Activated naive CD4-positive, alpha-beta T cell treated with anti-CD3 and anti-CD28 coated beads for 36 hours (primary cell): ENCODE measurements at regions of chr5 and their contacts with region 1.

Region 1: GRCh38 chr5:179142434-179143198 is 82.4 kb downstream of the ZNF354C start:
- DNase-seq: peak; percentile 75
- H3K4me3 Mint-ChIP-seq: no peak overlapping the region
- H3K27ac Mint-ChIP-seq: peak overlapping the region; percentile 79
- H3K4me1 Mint-ChIP-seq: peaks cover 48% of the 10 kb centered on the region
- H3K27me3 Mint-ChIP-seq: no peaks in the 10 kb centered on the region

Region 2: DNA sequence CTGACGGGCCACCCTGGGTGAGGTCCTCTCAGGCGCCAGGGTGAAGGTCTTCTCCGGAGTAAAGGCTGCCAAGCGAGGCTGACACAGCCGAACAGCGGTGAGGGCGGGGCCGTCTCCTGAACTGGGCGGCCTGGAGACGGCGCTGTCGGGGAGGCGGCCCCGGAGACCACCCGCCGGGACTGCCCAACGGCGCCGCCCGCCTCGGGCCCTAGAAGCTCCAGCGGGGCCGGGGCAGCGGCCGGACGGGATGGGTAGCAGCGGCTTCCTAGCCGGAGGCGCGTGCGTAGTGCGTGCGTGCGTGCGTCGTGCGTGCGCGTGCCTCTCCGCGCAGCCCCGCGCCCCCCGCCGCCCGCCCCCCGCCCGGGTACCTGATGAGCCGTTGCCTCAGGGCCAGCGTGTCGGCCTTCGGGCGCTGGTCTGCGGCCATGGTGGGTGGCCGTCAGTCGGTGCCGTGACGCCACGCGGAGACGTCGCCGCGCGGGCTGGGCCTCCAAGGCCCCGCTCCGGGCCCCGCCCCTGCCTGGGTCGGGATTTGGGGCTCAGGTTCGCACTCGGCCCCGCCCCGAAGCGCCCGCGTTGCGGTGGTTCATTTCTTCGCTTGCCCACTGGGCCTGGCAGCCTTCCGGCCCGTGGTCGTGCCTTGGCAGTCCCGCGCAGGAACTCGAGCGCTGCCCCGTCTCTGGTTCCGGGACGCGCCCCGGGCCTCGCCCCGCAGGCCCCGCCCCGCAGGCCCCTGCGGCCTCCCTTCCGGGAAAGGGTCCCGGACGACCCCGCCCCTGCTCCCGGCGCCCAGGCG is 910.3 kb before region 1 on chr5 and contains the start of gene PHYKPL:
- CTCF ChIA-PET with region 1: no interaction called
- intact Hi-C with region 1: loop called (anchors 10 kb)
- DNase-seq: peak; percentile 63
- H3K4me3 Mint-ChIP-seq: peak within 1 kb of the TSS; percentile 86
- H3K27ac Mint-ChIP-seq: peak within 1 kb of the TSS; percentile 80
- H3K4me1 Mint-ChIP-seq: peaks cover 55% of the 10 kb centered on the region
- H3K27me3 Mint-ChIP-seq: no peaks in the 10 kb centered on the region
- total RNA-seq, gene PHYKPL: 50.9 to 51.2 TPM

Region 3: GRCh38 chr5:178859625-178860531 is 282.7 kb before region 1 on chr5 and contains the start of gene ZNF354B:
- CTCF ChIA-PET with region 1: no interaction called
- intact Hi-C with region 1: loop called (anchors 1 kb)
- DNase-seq: peak; percentile 91
- H3K4me3 Mint-ChIP-seq: peak within 1 kb of the TSS; percentile 89
- H3K27ac Mint-ChIP-seq: peak within 1 kb of the TSS; percentile 66
- H3K4me1 Mint-ChIP-seq: peaks cover 21% of the 10 kb centered on the region
- H3K27me3 Mint-ChIP-seq: no peaks in the 10 kb centered on the region
- total RNA-seq, gene ZNF354B: 8.6 to 8.9 TPM

Region 4: DNA sequence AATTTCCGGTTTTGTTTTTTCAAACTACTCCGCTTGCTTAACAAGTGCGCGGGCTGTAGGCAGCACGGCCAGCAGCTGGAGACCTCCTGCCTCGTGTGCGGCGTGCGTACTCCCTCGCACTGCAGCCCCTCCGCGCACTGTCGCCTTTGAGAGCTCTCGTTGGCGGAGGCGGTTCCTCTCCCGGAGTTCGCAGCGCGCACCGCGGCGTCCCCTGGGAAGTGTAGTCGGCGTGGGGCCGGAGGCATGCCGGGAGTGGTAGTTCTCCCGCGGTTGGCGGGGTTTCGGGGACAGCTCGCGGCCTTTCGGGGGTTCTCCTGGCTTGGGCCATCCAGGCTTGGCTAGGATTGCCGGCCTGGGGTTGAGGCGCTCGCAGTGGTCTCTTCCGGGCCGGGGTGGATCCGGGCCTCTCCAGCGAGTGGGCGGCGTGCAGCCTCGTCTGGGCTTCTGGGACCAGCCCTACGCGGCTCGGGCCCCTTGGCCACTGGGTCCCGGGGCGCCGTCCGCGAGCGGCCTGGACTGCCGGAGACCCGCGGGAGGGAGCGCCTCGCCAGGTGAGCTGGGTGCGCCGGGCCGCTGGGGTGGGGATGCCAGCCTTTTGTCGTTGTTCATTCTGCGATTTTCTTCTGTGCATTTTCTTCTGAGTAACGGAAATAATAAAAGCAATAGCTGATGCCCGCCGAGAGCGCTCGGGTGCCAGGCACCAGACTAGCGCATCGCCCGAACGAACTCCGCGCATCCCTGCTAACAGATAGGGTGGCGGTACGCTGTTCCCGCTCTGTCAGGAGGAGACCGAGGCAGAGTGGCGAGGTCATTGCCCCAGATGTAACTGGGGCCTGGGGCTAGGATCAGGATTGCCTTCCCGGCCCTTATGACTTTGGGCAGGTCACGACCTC is 82.3 kb before region 1 on chr5 and contains the start of gene ZNF354C:
- CTCF ChIA-PET with region 1: no interaction called
- intact Hi-C with region 1: loop called (anchors 2 kb)
- DNase-seq: peak; percentile 90
- H3K4me3 Mint-ChIP-seq: peak within 1 kb of the TSS; percentile 87
- H3K27ac Mint-ChIP-seq: peak within 1 kb of the TSS; percentile 81
- H3K4me1 Mint-ChIP-seq: peaks cover 15% of the 10 kb centered on the region
- H3K27me3 Mint-ChIP-seq: no peaks in the 10 kb centered on the region
- total RNA-seq, gene ZNF354C: 5.8 to 6.1 TPM

Region 5: DNA sequence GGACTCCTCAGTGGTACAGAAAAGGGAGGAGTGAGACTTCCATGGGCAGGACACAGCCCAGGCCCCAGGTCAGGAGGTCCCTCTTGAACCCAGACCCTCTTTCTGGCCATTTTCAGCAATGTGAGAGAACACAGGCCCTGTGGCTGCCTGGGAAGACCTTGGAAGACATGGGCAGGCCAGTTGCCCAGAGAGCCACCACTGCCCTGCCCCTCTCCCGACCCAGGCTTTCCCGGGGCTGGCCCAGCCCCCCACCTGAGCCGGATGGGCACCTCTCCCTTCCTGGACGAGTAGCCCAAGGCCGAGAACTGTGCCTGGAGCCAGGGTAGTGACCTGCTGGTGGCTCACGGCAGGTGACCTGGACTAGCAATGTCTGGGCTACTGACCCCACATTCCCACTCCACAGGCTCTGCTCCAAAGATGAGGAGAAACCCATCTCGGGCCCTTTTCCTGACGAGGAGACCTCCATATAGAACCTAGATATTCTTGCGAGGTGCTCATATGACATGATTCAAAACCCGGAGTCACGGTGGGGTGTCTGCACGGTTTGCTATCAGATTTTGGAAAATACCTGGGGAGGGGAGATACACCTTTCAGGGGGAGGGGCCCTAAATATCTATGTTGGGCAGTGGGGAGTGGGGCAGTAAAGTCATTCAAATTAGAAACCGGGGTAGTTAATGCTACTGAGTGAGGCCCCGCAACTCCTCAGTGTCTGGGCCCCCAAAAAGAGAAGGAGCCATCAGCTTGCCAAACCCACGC is 23.0 kb before region 1 on chr5:
- CTCF ChIA-PET with region 1: no interaction called
- intact Hi-C with region 1: no loop called
- DNase-seq: no peak
- H3K4me3 Mint-ChIP-seq: no peak overlapping the region
- H3K27ac Mint-ChIP-seq: no peak overlapping the region
- H3K4me1 Mint-ChIP-seq: no peaks in the 10 kb centered on the region
- H3K27me3 Mint-ChIP-seq: no peaks in the 10 kb centered on the region

Region 6: DNA sequence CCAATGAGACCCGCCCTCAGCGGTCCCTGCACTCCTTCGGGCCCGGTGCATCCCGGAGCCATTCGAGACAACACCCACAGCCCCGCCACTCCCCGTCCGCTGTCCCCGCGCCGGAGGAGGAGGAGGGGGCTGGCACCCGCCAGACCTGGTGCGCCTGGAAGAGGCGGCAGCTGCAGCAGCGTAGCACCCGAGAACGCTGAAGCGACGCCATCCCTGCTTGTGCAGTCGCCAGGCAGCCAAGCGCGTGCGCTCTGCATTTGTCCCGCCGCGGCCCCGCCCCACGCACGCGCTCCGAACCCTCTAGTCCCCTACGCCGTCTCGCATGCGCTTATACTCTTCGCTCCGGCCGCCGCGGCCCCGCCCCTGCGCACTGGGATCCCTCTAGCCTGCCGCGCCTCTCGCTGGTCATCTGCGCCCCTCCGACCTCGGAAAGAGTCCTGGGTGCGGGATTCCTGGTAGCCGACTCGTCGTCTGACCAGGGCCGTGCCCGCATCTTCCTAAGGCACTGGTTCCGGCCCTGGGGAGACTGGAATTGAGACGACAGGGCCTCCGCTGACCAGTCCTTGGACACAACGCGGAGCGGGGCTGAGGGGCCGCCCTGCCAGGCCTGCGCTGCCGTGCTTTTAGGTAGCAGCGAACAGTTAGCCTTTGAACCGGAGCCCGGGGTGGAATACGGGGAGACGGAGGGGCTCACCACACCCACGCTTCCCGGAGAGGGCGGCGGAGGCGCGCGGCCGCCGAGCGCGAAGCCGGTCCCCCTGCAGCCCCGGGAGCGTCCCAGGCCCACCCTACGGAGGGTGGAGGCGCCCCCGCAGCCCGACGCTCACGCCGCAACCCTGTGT is 716.2 kb after region 1 on chr5 and contains the start of gene MRNIP:
- CTCF ChIA-PET with region 1: no interaction called
- intact Hi-C with region 1: loop called (anchors 10 kb)
- DNase-seq: peak; percentile 93
- H3K4me3 Mint-ChIP-seq: peak within 1 kb of the TSS; percentile 93
- H3K27ac Mint-ChIP-seq: peak within 1 kb of the TSS; percentile 82
- H3K4me1 Mint-ChIP-seq: peaks cover 14% of the 10 kb centered on the region
- H3K27me3 Mint-ChIP-seq: no peaks in the 10 kb centered on the region
- total RNA-seq, gene MRNIP: 16.2 to 16.3 TPM

Region 7: DNA sequence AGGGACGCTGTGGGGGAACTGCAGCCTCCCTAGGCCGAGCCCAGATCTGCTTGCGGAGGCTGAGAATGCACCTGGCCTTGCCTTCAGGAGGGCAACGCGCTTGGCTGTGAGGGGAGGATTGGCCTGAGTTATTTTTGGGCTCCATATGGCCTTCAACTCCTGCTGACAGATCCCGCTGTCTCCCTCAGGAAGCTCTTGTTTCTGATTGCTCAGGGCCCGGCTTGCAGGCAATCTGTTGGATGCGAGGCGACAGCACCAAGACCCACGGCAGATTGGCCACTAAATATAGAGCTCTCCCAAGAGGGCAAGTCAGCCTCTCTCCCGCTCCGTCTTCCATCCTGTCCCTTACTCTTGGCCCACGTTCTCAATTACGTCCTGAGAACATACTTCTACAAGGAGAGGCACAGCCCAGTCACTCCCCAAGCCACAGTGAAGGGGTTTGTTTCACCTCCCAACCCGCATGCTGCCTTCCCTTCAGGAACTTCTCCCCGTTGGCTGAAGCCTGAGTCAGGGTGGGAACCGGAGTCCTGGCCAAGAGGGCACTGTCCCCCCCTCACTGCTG is 1012.8 kb after region 1 on chr5:
- CTCF ChIA-PET with region 1: no interaction called
- intact Hi-C with region 1: no loop called
- DNase-seq: no peak
- H3K4me3 Mint-ChIP-seq: no peak overlapping the region
- H3K27ac Mint-ChIP-seq: no peak overlapping the region
- H3K4me1 Mint-ChIP-seq: no peaks in the 10 kb centered on the region
- H3K27me3 Mint-ChIP-seq: peaks cover 7% of the 10 kb centered on the region